Activated CD4-positive, alpha-beta T cell treated with anti-CD3 and anti-CD28 coated beads for 36 hours (primary cell): ENCODE measurements at regions of chr1 and their contacts with region 1.

Region 1: GRCh38 chr1:147072370-147073061 is 99.8 kb downstream of the PRKAB2 start:
- DNase-seq: peak; percentile 54
- ATAC-seq: peak; percentile 76
- H3K4me3 Mint-ChIP-seq: peak overlapping the region; percentile 66
- H3K27ac Mint-ChIP-seq: peak overlapping the region; percentile 44
- H3K4me1 Mint-ChIP-seq: peaks cover 27% of the 10 kb centered on the region
- H3K27me3 Mint-ChIP-seq: peaks cover 43% of the 10 kb centered on the region

Region 2: DNA sequence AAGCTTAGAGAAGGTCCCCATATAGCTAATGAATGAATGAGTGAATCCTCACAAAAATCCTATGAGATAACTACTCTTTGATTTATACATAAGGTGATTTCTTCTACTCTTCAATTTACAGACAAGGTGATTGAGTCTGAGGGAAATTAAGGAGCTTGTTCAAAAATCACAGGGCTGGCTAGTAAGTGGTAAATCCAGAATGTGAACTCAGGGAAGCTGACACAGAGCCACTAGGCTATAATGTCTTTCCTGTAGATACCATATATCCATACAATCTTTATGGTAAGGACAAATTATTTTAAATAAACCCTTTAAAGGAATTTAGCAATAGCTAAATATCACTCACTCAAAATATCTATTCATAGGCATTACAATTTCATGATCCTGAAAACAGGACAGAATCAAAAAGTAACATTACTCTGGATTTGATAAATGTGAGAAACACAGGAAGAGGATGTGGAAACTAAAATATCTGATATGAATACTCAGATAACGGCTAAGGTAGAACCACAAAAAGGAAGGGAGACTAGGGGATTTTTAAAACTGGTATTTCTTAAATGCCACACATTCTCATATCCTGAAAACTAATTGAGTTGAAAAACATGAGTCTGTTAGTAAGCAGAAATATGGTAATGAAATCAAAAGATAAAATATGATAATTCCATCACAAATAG is 26.2 kb before region 1 on chr1:
- CTCF ChIA-PET with region 1: no interaction called
- POLR2A ChIA-PET with region 1: no interaction called
- intact Hi-C with region 1: loop called in 1 of 2 experiments (anchors 2 kb)
- DNase-seq: no peak
- ATAC-seq: peak; percentile 74
- H3K4me3 Mint-ChIP-seq: no peak overlapping the region
- H3K27ac Mint-ChIP-seq: peak overlapping the region; percentile 74
- H3K4me1 Mint-ChIP-seq: peaks cover 37% of the 10 kb centered on the region
- H3K27me3 Mint-ChIP-seq: peaks cover 9% of the 10 kb centered on the region

Region 3: GRCh38 chr1:147214842-147215539 is 142.5 kb after region 1 on chr1:
- CTCF ChIA-PET with region 1: no interaction called
- POLR2A ChIA-PET with region 1: no interaction called
- intact Hi-C with region 1: no loop called
- DNase-seq: no peak
- ATAC-seq: no peak
- H3K4me3 Mint-ChIP-seq: no peak overlapping the region
- H3K27ac Mint-ChIP-seq: no peak overlapping the region
- H3K4me1 Mint-ChIP-seq: no peaks in the 10 kb centered on the region
- H3K27me3 Mint-ChIP-seq: no peaks in the 10 kb centered on the region